Transverse colon (tissue), 4 donors: ENCODE measurements at regions of chr21 and their contacts with region 1.

Region 1: GRCh38 chr21:32233055-32233546 is 45.7 kb downstream of the MIS18A start:
- DNase-seq: no peak
- H3K4me3 ChIP-seq: no peak overlapping the region
- H3K27ac ChIP-seq: no peak overlapping the region
- H3K4me1 ChIP-seq: no peaks in the 10 kb centered on the region
- H3K27me3 ChIP-seq: no peaks in the 10 kb centered on the region
- CTCF ChIP-seq: no peak
- EP300 ChIP-seq: no peak
- POLR2A ChIP-seq: no peak

Region 2: DNA sequence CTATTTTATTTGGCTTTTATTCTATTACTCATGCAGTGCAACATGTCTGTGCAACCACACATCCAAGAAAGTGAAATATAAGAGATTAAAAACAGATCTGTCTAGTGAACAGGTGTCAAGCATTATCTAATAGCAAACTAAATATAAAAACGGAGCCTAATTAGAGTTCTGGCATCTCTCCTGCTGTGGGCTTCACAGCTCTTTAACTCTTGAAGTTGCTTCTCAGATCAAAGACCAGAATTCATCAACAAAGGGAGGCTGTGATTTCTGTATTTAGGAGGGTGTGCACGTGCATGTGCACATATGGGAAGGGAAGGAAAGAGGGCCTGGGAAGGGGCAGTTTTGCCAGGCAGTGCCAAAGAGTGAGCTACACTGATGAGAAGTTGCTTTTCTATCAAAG is 35.2 kb before region 1 on chr21:
- in situ Hi-C with region 1: no loop called
- intact Hi-C with region 1: loop called (anchors 1 kb)
- DNase-seq: no peak
- H3K4me3 ChIP-seq: no peak overlapping the region
- H3K27ac ChIP-seq: no peak overlapping the region
- H3K4me1 ChIP-seq: no peaks in the 10 kb centered on the region
- H3K27me3 ChIP-seq: no peaks in the 10 kb centered on the region
- CTCF ChIP-seq: no peak
- EP300 ChIP-seq: no peak
- POLR2A ChIP-seq: no peak